Right lobe of liver (tissue), 6 donors: ENCODE measurements at regions of chr22 and their contacts with region 1.

Region 1: GRCh38 chr22:49936018-49936952 is 17.9 kb downstream of the CRELD2 start:
- DNase-seq: peak; percentile 91 to 98 (median 94)
- ATAC-seq: peak; percentile 76 to 80 (median 78)
- H3K4me3 ChIP-seq: peak overlapping the region in 2 of 3 donors; percentile 14 to 42
- H3K27ac ChIP-seq: peak overlapping the region; percentile 33 to 82 (median 65)
- H3K4me1 ChIP-seq: peaks cover 0 to 30% (median 12%) of the 10 kb centered on the region in 4 donors
- H3K27me3 ChIP-seq: no peaks in the 10 kb centered on the region
- CTCF ChIP-seq: no peak
- POLR2A ChIP-seq: peak; percentile 51

Region 2: DNA sequence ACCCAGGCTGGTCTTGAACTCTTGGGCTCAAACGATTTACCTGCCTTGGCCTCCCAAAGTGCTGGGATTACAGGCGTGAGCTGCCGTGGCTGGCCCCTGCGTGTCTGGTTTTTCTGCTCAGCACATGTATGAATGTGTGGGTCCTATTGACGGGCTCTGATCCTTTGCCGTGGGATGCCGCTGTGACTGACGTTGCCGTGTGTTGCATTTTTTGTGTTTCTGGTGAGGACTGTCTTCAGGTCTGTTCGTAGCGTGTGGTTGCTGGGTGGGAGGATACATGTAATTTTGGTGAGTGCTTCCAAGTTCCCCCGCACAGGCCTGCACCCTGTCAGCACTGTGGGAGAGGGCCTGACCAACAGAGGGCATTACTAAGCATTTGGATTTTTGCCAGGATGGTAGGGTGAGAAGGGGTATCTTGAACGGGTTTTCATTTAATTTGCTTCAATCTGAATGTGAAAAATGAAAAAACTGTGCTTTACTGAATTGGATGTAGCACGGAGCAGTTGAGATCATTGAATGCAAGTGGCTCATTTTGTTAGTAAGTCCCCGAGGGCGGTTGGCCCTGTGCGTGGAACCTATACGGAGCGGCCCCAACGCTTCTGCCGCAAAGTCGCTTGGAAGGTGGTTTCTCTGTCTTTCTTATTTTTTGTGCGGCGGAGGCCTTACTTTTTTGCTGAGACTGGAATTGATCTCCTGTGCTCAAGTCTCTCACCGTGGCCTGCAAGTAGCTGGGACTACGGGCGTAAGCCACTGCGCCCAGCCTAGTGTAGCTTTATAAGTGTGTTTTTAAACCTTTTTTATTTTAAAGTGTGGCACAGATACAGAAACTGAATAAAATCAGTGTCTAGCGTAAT is 74.4 kb before region 1 on chr22:
- intact Hi-C with region 1: no loop called
- DNase-seq: no peak
- ATAC-seq: no peak
- H3K4me3 ChIP-seq: no peak overlapping the region
- H3K27ac ChIP-seq: no peak overlapping the region
- H3K4me1 ChIP-seq: no peaks in the 10 kb centered on the region
- H3K27me3 ChIP-seq: no peaks in the 10 kb centered on the region
- CTCF ChIP-seq: no peak
- POLR2A ChIP-seq: no peak

Region 3: DNA sequence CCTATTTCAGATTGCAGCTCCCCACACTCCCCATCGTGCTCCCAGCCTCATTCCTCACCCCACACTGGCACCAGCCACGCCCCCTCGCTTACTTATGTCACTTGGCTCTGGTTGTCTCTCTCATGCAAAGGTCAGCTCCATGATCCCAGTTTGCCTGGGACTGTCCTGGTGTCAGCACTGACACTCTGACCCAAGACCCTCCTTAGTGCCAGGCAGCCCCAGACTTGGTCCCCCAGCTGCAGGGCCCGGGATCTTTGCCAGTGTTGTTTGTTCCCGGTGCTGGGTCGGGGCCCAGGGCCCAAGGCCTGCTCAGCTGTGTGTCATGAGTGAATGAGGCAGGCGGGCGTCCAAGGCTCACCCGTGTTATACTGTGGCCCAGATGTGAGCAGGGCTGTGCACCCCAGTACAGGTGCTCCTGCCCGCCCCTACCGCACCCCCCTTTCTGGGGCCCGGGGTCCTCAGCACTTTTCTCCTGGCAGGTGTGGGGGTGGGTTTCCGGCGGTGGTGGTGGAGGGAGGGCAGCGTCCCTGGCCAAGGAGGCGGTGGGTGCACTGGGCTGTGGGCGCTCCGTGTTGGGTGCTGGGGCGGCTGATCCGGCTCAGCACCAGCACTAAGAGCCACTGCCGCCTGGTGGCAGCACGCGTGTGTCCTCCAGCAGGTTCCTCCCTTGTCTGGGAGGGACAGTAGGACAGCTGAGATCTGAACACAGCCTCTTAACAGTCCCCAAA is 56.8 kb after region 1 on chr22:
- intact Hi-C with region 1: loop called in 1 of 2 experiments (anchors 10 kb)
- DNase-seq: peak; percentile 66 to 81 (median 81)
- ATAC-seq: peak; percentile 88 to 95 (median 94)
- H3K4me3 ChIP-seq: no peak overlapping the region
- H3K27ac ChIP-seq: no peak overlapping the region
- H3K4me1 ChIP-seq: no peaks in the 10 kb centered on the region
- H3K27me3 ChIP-seq: no peaks in the 10 kb centered on the region
- CTCF ChIP-seq: peak; percentile 71 to 84 (median 80)
- POLR2A ChIP-seq: no peak

Region 4: DNA sequence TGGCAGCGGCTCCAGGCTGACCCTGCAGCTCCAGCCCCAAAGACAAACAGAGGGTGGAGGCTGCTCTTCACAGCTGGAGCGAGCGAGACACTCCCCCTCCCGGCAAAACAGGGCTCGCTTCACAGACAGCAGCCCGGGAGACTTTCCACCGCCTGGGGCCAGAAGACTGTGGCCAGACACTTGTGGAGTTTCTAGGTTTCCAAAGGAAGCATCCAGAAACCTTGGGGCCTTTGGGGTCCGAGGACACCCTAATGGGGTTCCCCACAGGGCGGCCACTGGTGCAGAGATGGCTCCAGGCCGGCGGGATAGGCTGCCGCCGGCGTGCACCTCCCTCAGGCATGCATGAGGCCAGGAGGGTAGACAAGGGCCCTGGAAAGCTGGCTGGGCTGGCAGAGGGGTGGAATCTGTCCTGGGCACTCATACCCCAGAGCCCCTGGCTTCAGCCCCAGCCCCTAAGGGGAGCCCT is 76.5 kb after region 1 on chr22 and contains the start of gene IL17REL:
- intact Hi-C with region 1: no loop called
- DNase-seq: peak in 1 of 3 donors; percentile 29
- ATAC-seq: peak; percentile 7 to 65 (median 47)
- H3K4me3 ChIP-seq: no peak within 1 kb of the TSS
- H3K27ac ChIP-seq: no peak within 1 kb of the TSS
- H3K4me1 ChIP-seq: peaks cover 0 to 2% (median 0%) of the 10 kb centered on the region in 4 donors
- H3K27me3 ChIP-seq: peaks cover 0 to 24% of the 10 kb centered on the region in 2 donors
- CTCF ChIP-seq: peak in 2 of 4 donors; percentile 6 to 14
- POLR2A ChIP-seq: no peak
- total RNA-seq, gene IL17REL: not detected